ENCODE measurements at regions of chr17 and their contacts with region 1.

Region 1: GRCh38 chr17:28041068-28041843 is 1.2 kb upstream of the NLK start:
- DNase-seq: peak; percentile 98 to 100 (median 100)
- H3K4me3 ChIP-seq: peak overlapping the region; percentile 64 to 99 (median 91)
- H3K27ac ChIP-seq: peak overlapping the region; percentile 60 to 96 (median 90)
- H3K27me3 ChIP-seq: no peaks in the 10 kb centered on the region
- CTCF ChIP-seq: peak in 4 of 56 donors; percentile 11 to 12 (median 12)

Region 2: GRCh38 chr17:27970587-27970986 is 70.7 kb before region 1 on chr17:
- intact Hi-C with region 1: no loop called
- DNase-seq: no peak
- H3K4me3 ChIP-seq: no peak overlapping the region
- H3K27ac ChIP-seq: peak overlapping the region in 6 of 59 donors; percentile 3 to 37 (median 18)
- H3K27me3 ChIP-seq: no peaks in the 10 kb centered on the region
- CTCF ChIP-seq: no peak

Region 3: GRCh38 chr17:27982688-27983087 is 58.6 kb before region 1 on chr17:
- intact Hi-C with region 1: no loop called
- DNase-seq: no peak
- H3K4me3 ChIP-seq: no peak overlapping the region
- H3K27ac ChIP-seq: no peak overlapping the region
- H3K27me3 ChIP-seq: no peaks in the 10 kb centered on the region
- CTCF ChIP-seq: no peak

Region 4: GRCh38 chr17:27993723-27994310 is 47.4 kb before region 1 on chr17:
- intact Hi-C with region 1: loop called in 1 of 2 experiments (anchors 2 kb)
- DNase-seq: peak in 1 of 10 donors; percentile 43
- H3K4me3 ChIP-seq: peak overlapping the region in 11 of 59 donors; percentile 2 to 32 (median 10)
- H3K27ac ChIP-seq: peak overlapping the region; percentile 4 to 98 (median 94)
- H3K27me3 ChIP-seq: no peaks in the 10 kb centered on the region
- CTCF ChIP-seq: peak in 4 of 56 donors; percentile 4 to 8 (median 5)

Region 5: GRCh38 chr17:28001149-28001548 is 40.1 kb before region 1 on chr17:
- intact Hi-C with region 1: loop called (anchors 2 to 5 kb)
- DNase-seq: no peak
- H3K4me3 ChIP-seq: no peak overlapping the region
- H3K27ac ChIP-seq: peak overlapping the region in 4 of 59 donors; percentile 11 to 20 (median 16)
- H3K27me3 ChIP-seq: no peaks in the 10 kb centered on the region
- CTCF ChIP-seq: no peak

Region 6: GRCh38 chr17:28145348-28145747 is 104.1 kb after region 1 on chr17:
- intact Hi-C with region 1: loop called (anchors 2 to 5 kb)
- DNase-seq: no peak
- H3K4me3 ChIP-seq: no peak overlapping the region
- H3K27ac ChIP-seq: peak overlapping the region in 44 of 59 donors; percentile 1 to 95 (median 76)
- H3K27me3 ChIP-seq: no peaks in the 10 kb centered on the region
- CTCF ChIP-seq: no peak

Region 7: GRCh38 chr17:28193241-28193640 is 152.0 kb after region 1 on chr17:
- intact Hi-C with region 1: loop called in 1 of 2 experiments (anchors 5 kb)
- DNase-seq: peak in 3 of 10 donors; percentile 32 to 44 (median 43)
- H3K4me3 ChIP-seq: no peak overlapping the region
- H3K27ac ChIP-seq: peak overlapping the region in 56 of 59 donors; percentile 1 to 85 (median 68)
- H3K27me3 ChIP-seq: no peaks in the 10 kb centered on the region
- CTCF ChIP-seq: peak in 38 of 56 donors; percentile 6 to 55 (median 30)

Region 8: GRCh38 chr17:28896884-28897768 is 855.9 kb after region 1 on chr17 and contains the start of gene FLOT2:
- intact Hi-C with region 1: no loop called
- DNase-seq: peak in 8 of 10 donors; percentile 31 to 75 (median 55)
- H3K4me3 ChIP-seq: peak within 1 kb of the TSS; percentile 41 to 97 (median 88)
- H3K27ac ChIP-seq: peak within 1 kb of the TSS; percentile 59 to 99 (median 95)
- H3K27me3 ChIP-seq: no peaks in the 10 kb centered on the region
- CTCF ChIP-seq: peak in 34 of 56 donors; percentile 6 to 56 (median 28)
- total RNA-seq, gene FLOT2: 50.7 to 182 (median 108) TPM